Natural killer cell (primary cell): ENCODE measurements at regions of chr16 and their contacts with region 1.

Region 1: GRCh38 chr16:81521151-81521626 is 76.6 kb downstream of the CMIP start:
- DNase-seq: peak; percentile 88 to 94
- ATAC-seq: peak; percentile 45 to 66 (median 63)
- H3K4me3 ChIP-seq: no peak overlapping the region
- H3K4me3 Mint-ChIP-seq: peak overlapping the region; percentile 85
- H3K27ac ChIP-seq: peak overlapping the region; percentile 86
- H3K27ac Mint-ChIP-seq: peak overlapping the region; percentile 96 to 100
- H3K4me1 ChIP-seq: peaks cover 71% of the 10 kb centered on the region
- H3K4me1 Mint-ChIP-seq: peaks cover 61 to 68% of the 10 kb centered on the region in 2 donors
- H3K27me3 ChIP-seq: no peaks in the 10 kb centered on the region
- H3K27me3 Mint-ChIP-seq: no peaks in the 10 kb centered on the region
- CTCF ChIP-seq: no peak

Region 2: GRCh38 chr16:81444448-81445121 is 76.6 kb before region 1 on chr16 and contains the start of gene CMIP:
- intact Hi-C with region 1: loop called (anchors 1 kb)
- DNase-seq: peak; percentile 90 to 91
- ATAC-seq: peak; percentile 67 to 89 (median 79)
- H3K4me3 ChIP-seq: peak within 1 kb of the TSS; percentile 74
- H3K4me3 Mint-ChIP-seq: peak within 1 kb of the TSS; percentile 93
- H3K27ac ChIP-seq: peak within 1 kb of the TSS; percentile 88
- H3K27ac Mint-ChIP-seq: peak within 1 kb of the TSS; percentile 91 to 93
- H3K4me1 ChIP-seq: peaks cover 48% of the 10 kb centered on the region
- H3K4me1 Mint-ChIP-seq: peaks cover 45 to 53% of the 10 kb centered on the region in 2 donors
- H3K27me3 ChIP-seq: no peaks in the 10 kb centered on the region
- H3K27me3 Mint-ChIP-seq: no peaks in the 10 kb centered on the region
- CTCF ChIP-seq: no peak
- total RNA-seq, gene CMIP: 88.2 to 115 (median 91.5) TPM

Region 3: DNA sequence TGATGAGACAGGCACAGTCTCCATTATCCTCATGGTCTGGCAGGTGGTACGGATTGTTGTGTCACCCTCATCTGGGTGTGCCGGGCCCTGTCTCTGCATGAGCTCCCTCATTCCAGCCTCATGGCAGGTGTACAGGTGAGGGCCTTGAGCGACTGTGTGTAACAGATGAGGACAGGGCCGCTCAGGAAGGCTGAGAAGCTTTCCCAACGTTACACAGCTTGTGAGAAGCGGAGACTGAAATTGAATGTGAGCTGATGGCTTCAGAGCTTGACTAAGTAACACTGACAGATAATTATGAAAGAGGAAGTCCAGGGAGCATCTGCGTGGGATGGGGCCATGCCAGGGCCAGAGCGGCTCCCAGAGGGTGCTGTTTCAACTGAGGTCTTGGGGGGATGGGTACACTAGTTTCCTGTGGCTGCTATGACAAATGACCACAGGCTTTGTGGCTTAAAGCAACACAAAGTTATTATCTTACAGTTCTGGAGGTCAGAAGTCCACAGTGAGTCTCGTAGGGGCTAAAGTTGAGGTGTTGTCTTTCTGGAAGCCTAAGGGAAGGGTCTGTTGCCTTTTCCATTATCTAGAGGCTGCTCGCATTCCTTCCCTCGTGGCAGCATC is 39.9 kb before region 1 on chr16:
- intact Hi-C with region 1: loop called (anchors 1 kb)
- DNase-seq: peak; percentile 31 to 36
- ATAC-seq: peak; percentile 64 to 89 (median 68)
- H3K4me3 ChIP-seq: no peak overlapping the region
- H3K4me3 Mint-ChIP-seq: peak overlapping the region; percentile 52
- H3K27ac ChIP-seq: peak overlapping the region; percentile 83
- H3K27ac Mint-ChIP-seq: peak overlapping the region; percentile 88 to 97
- H3K4me1 ChIP-seq: peaks cover 74% of the 10 kb centered on the region
- H3K4me1 Mint-ChIP-seq: peaks cover 75 to 85% of the 10 kb centered on the region in 2 donors
- H3K27me3 ChIP-seq: no peaks in the 10 kb centered on the region
- H3K27me3 Mint-ChIP-seq: no peaks in the 10 kb centered on the region
- CTCF ChIP-seq: no peak

Region 4: DNA sequence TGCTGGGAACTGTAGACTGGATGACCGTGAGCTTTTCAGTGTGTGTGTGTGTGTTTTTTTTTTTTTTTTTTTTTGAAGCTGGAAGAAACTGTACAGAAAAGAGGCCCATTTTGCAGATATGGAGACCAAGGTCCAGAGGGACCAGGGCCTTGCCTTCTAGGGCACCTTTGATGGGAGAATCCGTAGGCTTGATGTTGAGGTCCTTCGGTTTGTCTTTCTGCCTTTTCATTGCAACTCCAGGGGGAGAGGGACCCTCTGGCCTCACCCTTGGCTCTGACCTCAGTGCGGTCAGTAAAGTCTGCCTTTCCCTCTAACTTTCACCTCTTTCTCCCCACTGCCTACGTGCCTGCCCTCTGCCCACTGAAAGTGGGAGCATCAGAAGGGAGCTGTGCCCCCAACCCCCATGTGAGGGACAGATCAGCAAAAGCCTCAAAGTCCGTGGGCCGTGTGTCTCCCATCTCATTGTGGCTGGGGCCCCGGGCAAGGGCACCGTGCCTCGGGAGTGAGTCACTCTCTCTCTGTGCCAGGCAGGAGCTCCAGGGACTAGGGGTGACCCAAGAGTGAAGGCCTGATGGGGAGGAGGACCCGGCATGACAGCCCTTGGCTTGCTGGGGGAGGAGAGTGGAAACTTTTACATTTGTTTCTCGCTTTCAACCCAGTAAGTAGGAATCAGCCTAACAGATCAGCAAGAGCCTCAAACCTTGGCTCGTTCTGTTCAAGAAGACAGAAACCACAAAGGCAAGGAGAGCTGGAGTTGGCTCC is 47.0 kb after region 1 on chr16:
- intact Hi-C with region 1: loop called (anchors 2 kb)
- DNase-seq: no peak
- ATAC-seq: peak in 1 of 3 donors; percentile 76
- H3K4me3 ChIP-seq: no peak overlapping the region
- H3K4me3 Mint-ChIP-seq: no peak overlapping the region
- H3K27ac ChIP-seq: no peak overlapping the region
- H3K27ac Mint-ChIP-seq: peak overlapping the region; percentile 63 to 75
- H3K4me1 ChIP-seq: peaks cover 21% of the 10 kb centered on the region
- H3K4me1 Mint-ChIP-seq: peaks cover 57 to 67% of the 10 kb centered on the region in 2 donors
- H3K27me3 ChIP-seq: no peaks in the 10 kb centered on the region
- H3K27me3 Mint-ChIP-seq: no peaks in the 10 kb centered on the region
- CTCF ChIP-seq: no peak

Region 5: DNA sequence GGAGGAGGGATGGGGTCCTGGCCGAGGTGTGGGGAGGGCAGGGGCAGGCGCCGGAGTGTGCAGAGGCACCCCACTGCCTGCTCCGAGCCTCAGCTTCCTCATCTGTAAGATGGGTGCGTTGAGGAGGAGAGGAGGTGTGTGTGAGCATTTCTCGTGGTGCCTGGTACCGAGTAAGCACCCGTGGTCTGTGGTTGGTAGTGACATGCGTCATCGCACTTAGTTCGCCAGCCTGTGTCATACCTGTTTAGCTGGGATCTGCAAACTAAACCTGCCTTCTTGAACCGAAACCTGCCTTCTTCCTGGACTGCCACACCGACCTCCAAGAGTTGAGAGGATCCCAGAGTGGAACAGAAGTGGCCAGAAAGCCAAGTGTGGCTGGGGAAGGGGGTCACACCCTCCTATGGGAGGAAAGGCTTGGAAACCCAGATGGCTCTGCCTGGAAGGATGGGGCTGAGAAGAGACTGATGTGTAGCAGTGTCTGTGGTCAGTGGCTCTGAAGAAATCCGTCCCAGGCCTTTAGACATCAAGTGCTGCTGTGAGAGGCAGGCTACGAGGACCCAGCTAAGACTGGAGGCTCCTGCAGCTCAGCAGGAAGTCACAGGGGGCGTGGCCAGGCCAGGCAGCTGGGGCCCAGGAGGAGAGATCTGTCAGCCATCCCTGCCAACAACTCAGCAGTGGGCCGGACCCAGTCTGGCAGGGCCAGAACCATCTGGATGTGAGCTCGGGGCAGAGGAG is 95.3 kb after region 1 on chr16:
- intact Hi-C with region 1: loop called (anchors 1 kb)
- DNase-seq: peak; percentile 76 to 90
- ATAC-seq: peak; percentile 86 to 89 (median 86)
- H3K4me3 ChIP-seq: no peak overlapping the region
- H3K4me3 Mint-ChIP-seq: peak overlapping the region; percentile 69
- H3K27ac ChIP-seq: peak overlapping the region; percentile 96
- H3K27ac Mint-ChIP-seq: no peak overlapping the region
- H3K4me1 ChIP-seq: peaks cover 22% of the 10 kb centered on the region
- H3K4me1 Mint-ChIP-seq: peaks cover 6 to 20% of the 10 kb centered on the region in 2 donors
- H3K27me3 ChIP-seq: no peaks in the 10 kb centered on the region
- H3K27me3 Mint-ChIP-seq: no peaks in the 10 kb centered on the region
- CTCF ChIP-seq: no peak

Region 6: GRCh38 chr16:81831722-81832126 is 310.5 kb after region 1 on chr16:
- intact Hi-C with region 1: loop called (anchors 5 kb)
- DNase-seq: peak; percentile 72 to 79
- ATAC-seq: peak; percentile 75 to 92 (median 85)
- H3K4me3 ChIP-seq: peak overlapping the region; percentile 43
- H3K4me3 Mint-ChIP-seq: peak overlapping the region; percentile 72
- H3K27ac ChIP-seq: peak overlapping the region; percentile 92
- H3K27ac Mint-ChIP-seq: peak overlapping the region; percentile 96 to 98
- H3K4me1 ChIP-seq: peaks cover 98% of the 10 kb centered on the region
- H3K4me1 Mint-ChIP-seq: peaks cover 76 to 84% of the 10 kb centered on the region in 2 donors
- H3K27me3 ChIP-seq: no peaks in the 10 kb centered on the region
- H3K27me3 Mint-ChIP-seq: no peaks in the 10 kb centered on the region
- CTCF ChIP-seq: peak; percentile 25